ENCODE measurements at regions of chr9 and their contacts with region 1.

Region 1: DNA sequence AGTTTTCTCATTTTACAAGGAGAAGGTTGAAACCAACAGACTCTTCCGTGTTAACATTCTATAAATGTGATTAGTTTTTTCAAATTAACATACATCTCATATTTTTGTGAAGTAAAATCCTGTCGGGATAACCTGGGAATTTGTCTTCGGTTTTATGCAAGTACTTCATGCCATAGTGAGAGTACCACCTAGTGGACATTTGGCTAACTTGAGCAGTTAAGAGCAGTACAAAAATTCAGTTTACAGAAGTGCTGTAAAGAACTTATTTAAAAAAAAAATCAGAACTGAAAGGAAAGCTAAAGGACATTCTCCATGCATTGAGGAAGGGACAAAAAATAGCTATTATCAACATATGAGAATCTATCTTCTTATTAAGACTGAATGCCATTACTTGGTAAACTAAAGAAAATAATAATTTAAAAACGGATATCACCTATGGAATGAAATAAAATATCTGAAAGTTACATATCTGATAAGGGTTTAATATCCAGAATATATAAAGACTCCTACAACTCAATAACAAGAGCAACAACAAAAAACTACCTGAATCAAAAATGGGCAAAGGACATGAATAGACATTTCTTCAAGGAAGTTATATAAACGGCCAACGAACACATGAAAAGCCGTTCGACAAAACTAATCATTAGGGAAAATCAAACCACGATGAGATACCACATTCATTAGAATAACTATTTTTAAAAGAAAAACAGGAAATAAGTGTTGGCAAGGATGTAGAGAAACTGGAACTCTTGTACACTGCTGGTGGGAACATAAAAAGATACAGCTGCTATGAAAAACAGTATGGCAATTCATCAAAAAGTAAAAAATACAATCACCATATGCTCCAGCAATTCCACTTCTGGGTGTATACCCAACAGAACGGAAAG is 117.0 kb upstream of the GNA14 start:
- DNase-seq: peak; percentile 3
- H3K4me3 Mint-ChIP-seq: no peak overlapping the region
- H3K27ac Mint-ChIP-seq: no peak overlapping the region
- H3K4me1 Mint-ChIP-seq: no peaks in the 10 kb centered on the region
- H3K27me3 Mint-ChIP-seq: no peaks in the 10 kb centered on the region
- CTCF ChIP-seq: no peak

Region 2: GRCh38 chr9:77456829-77457437 is 308.2 kb before region 1 on chr9:
- CTCF ChIA-PET with region 1: no interaction called
- intact Hi-C with region 1: loop called (anchors 5 kb)
- DNase-seq: peak; percentile 80
- H3K4me3 Mint-ChIP-seq: no peak overlapping the region
- H3K27ac Mint-ChIP-seq: no peak overlapping the region
- H3K4me1 Mint-ChIP-seq: peaks cover 8% of the 10 kb centered on the region
- H3K27me3 Mint-ChIP-seq: peaks cover 28% of the 10 kb centered on the region
- CTCF ChIP-seq: peak; percentile 49